Panc1 (cell line): ENCODE measurements at regions of chr17 and their contacts with region 1.

Region 1: DNA sequence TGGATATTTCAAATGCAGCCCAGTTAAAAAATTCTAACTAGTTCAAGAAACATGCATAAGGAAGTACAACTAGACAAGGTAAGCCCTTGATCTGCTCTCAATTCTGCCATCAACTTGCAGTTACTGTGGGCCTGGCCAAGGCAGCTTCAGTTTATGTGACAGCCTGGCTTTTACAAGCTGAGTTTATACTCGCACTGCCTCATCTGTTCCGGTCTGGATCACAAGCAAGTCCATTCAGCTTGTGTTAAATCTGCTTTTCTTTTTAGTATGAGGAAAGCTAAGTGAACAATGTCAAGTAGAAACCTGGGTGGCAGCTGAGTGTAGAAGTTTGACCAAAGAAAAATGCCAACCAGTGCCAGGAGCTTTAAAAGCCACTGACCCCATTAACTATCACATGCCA is 76.6 kb upstream of the CORO6 start:
- DNase-seq: no peak
- ATAC-seq: no peak
- H3K4me3 ChIP-seq: no peak overlapping the region
- H3K27ac ChIP-seq: no peak overlapping the region
- H3K4me1 ChIP-seq: no peaks in the 10 kb centered on the region
- H3K27me3 ChIP-seq: no peaks in the 10 kb centered on the region
- CTCF ChIP-seq: no peak

Region 2: DNA sequence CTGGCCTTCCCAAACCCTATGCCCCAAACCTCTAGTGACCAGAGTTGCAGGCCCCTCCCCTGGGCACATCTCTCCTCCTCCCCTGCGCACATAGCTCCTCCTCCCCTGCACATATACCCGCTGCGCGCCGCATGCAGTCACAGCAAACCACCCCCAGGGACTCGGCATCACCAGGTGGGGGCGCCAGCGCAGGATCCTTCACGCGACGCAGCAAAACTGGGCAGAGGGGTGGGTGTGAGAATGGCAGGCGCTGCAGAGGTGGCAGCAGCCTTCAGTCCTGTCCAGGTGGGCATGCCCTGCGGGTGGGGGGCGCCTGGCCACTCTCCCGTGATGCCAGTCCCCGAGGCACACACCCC is 82.2 kb before region 1 on chr17:
- CTCF ChIA-PET with region 1: interaction called, 12 read pairs
- POLR2A ChIA-PET with region 1: no interaction called
- in situ Hi-C with region 1: no loop called
- intact Hi-C with region 1: no loop called
- DNase-seq: no peak
- ATAC-seq: peak; percentile 71
- H3K4me3 ChIP-seq: peak overlapping the region; percentile 28 to 53; a peak in 3 of 4 replicates
- H3K27ac ChIP-seq: peak overlapping the region; percentile 71
- H3K4me1 ChIP-seq: peaks cover 42% of the 10 kb centered on the region
- H3K27me3 ChIP-seq: no peaks in the 10 kb centered on the region
- CTCF ChIP-seq: peak; percentile 85

Region 3: GRCh38 chr17:29771551-29771950 is 72.3 kb after region 1 on chr17:
- CTCF ChIA-PET with region 1: no interaction called
- POLR2A ChIA-PET with region 1: no interaction called
- in situ Hi-C with region 1: no loop called
- intact Hi-C with region 1: no loop called
- DNase-seq: no peak
- ATAC-seq: no peak
- H3K4me3 ChIP-seq: no peak overlapping the region
- H3K27ac ChIP-seq: no peak overlapping the region
- H3K4me1 ChIP-seq: no peaks in the 10 kb centered on the region
- H3K27me3 ChIP-seq: no peaks in the 10 kb centered on the region
- CTCF ChIP-seq: no peak; the same call in 1 of the 2 replicates